Mammary epithelial cell (primary cell): ENCODE measurements at regions of chr16 and their contacts with region 1.

Region 1: DNA sequence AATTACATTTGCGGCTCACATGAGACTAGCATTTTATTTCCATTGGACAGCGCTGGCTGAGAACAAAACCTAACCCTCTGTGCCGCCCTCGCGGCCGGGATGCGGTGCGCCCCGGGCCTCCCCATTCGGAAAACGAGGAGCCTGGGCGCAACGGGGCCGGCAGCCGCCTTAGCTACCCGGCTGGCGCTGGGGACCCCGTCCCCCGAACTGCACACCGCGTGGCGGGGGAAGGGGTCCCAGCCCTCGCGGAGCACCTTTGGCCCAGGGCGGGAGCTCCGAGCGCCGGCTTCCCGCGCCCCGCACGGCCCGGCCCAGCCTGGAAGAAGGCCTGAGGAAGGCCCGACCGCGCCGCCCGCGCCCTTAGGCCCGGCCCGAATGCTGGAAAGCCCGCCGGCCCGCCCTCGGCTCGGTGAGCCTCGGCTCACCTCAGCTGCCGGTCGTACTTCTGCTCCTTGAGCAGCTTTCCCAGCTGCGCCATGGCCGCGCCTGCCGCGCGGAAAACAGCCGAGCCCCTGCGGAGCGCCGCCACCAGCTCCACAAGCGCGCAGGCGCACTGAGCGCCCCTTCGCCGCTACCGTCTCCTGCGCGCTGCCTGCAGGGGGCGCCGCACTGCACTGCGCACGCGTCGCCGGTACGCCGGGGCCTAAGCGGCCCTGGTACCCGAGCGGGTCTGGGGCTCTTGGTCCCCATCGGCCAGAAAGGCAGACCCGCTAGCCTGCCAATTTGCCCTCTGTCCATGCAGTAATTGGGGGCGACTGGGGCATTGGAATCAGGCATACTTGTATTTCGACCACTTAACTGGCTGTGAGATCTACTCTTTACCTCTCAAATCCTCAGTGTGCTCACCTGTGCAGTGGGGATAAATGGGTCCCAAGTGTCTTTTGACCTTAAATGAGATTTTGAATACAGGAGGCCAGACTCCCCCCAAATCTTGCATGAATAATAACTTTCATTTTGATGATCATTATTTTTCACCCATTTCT is at the start of gene NAE1:
- DNase-seq: peak; percentile 83
- H3K4me3 ChIP-seq: peak within 1 kb of the TSS; percentile 73 to 80 (median 77)
- H3K27ac ChIP-seq: peak within 1 kb of the TSS; percentile 76
- H3K4me1 ChIP-seq: peaks cover 11% of the 10 kb centered on the region
- H3K27me3 ChIP-seq: no peaks in the 10 kb centered on the region
- CTCF ChIP-seq: peak; percentile 91 to 97
- total RNA-seq, gene NAE1: 66.5 to 81.1 TPM

Region 2: DNA sequence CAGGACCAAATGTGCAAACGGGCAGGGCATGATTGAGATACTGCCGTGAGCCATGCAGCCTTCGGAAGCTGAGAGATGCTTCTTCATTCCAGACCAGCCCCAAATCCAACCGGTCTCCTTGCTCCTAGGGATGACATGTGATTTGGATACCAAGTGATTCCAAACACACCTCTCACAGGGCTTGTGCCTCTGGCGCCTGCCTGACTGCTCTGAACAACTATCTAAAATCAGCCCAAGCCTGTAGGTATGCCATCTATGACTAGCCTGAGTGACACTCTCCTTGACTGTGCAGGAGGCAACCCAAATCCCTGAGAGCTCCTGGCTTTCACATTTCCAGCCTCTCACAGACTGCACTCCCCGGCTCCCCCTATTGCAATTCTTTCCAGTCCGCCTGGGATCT is 99.6 kb before region 1 on chr16:
- CTCF ChIA-PET with region 1: no interaction called
- dilution Hi-C with region 1: no loop called
- in situ Hi-C with region 1: no loop called
- intact Hi-C with region 1: no loop called
- DNase-seq: no peak
- H3K4me3 ChIP-seq: no peak overlapping the region
- H3K27ac ChIP-seq: no peak overlapping the region
- H3K4me1 ChIP-seq: peaks cover 5% of the 10 kb centered on the region
- H3K27me3 ChIP-seq: no peaks in the 10 kb centered on the region
- CTCF ChIP-seq: no peak

Region 3: GRCh38 chr16:66774981-66775380 is 55.7 kb before region 1 on chr16:
- CTCF ChIA-PET with region 1: no interaction called
- dilution Hi-C with region 1: no loop called
- in situ Hi-C with region 1: no loop called
- intact Hi-C with region 1: no loop called
- DNase-seq: no peak
- H3K4me3 ChIP-seq: no peak overlapping the region
- H3K27ac ChIP-seq: no peak overlapping the region
- H3K4me1 ChIP-seq: no peaks in the 10 kb centered on the region
- H3K27me3 ChIP-seq: no peaks in the 10 kb centered on the region
- CTCF ChIP-seq: no peak

Region 4: GRCh38 chr16:66880288-66881013 is 49.7 kb after region 1 on chr16 and contains the start of gene PDP2:
- CTCF ChIA-PET with region 1: interaction called, 11 read pairs
- dilution Hi-C with region 1: no loop called
- in situ Hi-C with region 1: no loop called
- intact Hi-C with region 1: no loop called
- DNase-seq: peak; percentile 91
- H3K4me3 ChIP-seq: peak within 1 kb of the TSS; percentile 52 to 81 (median 79)
- H3K27ac ChIP-seq: peak within 1 kb of the TSS; percentile 55
- H3K4me1 ChIP-seq: peaks cover 15% of the 10 kb centered on the region
- H3K27me3 ChIP-seq: no peaks in the 10 kb centered on the region
- CTCF ChIP-seq: no peak
- total RNA-seq, gene PDP2: 14.2 to 25.0 TPM

Region 5: DNA sequence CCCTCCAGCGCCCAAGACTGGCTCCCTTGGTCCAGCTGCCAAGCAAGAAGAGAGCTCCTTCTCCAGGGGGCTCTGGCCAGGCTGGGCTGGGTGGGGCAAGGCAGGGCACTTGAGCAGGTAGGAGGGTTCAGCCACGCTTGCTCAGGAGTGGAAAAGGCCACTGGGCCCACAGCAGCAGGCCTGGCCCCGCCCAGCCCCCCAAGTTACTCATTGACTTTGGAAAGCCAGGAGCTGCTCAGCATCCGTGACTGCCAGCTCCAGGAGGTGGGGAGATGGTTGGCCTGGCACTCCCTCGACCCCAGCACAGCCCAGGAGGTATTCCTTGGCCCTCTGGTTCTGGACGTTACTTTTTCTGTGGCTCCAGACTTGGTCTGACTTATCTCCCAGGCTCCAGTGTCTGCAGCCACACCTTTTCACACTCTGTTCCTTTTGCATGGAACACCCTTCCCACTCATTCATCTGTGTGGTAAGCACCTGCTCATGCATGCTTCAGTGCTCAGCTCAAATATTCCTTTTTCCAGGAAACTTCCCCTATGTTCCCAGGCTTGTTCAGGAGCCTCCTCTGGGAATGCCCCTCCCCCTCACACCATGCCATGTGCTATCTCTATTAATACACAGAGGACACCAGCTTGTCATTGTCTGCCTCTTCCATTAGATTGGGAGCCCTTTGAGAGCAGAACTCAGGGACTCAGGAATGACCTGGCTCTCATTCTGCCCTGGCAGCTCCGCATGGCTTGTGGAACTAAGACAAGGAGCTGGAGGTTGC is 88.3 kb after region 1 on chr16 and contains the start of gene CDH16:
- CTCF ChIA-PET with region 1: no interaction called
- dilution Hi-C with region 1: loop called (anchors 5 kb)
- in situ Hi-C with region 1: no loop called
- intact Hi-C with region 1: no loop called
- DNase-seq: no peak
- H3K4me3 ChIP-seq: no peak within 1 kb of the TSS
- H3K27ac ChIP-seq: no peak within 1 kb of the TSS
- H3K4me1 ChIP-seq: peaks cover 17% of the 10 kb centered on the region
- H3K27me3 ChIP-seq: no peaks in the 10 kb centered on the region
- CTCF ChIP-seq: no peak
- total RNA-seq, gene CDH16: 0.28 TPM in 1 of 2 donors, not detected in the other

Region 6: GRCh38 chr16:66928702-66929388 is 98.1 kb after region 1 on chr16:
- CTCF ChIA-PET with region 1: interaction called, 14 read pairs
- dilution Hi-C with region 1: no loop called
- in situ Hi-C with region 1: no loop called
- intact Hi-C with region 1: loop called (anchors 2 kb)
- DNase-seq: peak; percentile 32
- H3K4me3 ChIP-seq: no peak overlapping the region
- H3K27ac ChIP-seq: peak overlapping the region; percentile 89
- H3K4me1 ChIP-seq: peaks cover 48% of the 10 kb centered on the region
- H3K27me3 ChIP-seq: no peaks in the 10 kb centered on the region
- CTCF ChIP-seq: peak; percentile 44 to 72